CD4-positive, alpha-beta T cell (primary cell): ENCODE measurements at regions of chr7 and their contacts with region 1.

Region 1: GRCh38 chr7:99928994-99929729 is at the start of gene GJC3:
- DNase-seq: peak; percentile 15 to 68 (median 45)
- ATAC-seq: peak; percentile 94
- H3K4me3 ChIP-seq: peak within 1 kb of the TSS; percentile 43
- H3K4me3 Mint-ChIP-seq: peak within 1 kb of the TSS; percentile 79
- H3K27ac ChIP-seq: no peak within 1 kb of the TSS
- H3K27ac Mint-ChIP-seq: peak within 1 kb of the TSS; percentile 61
- H3K4me1 ChIP-seq: peaks cover 18% of the 10 kb centered on the region
- H3K4me1 Mint-ChIP-seq: peaks cover 31% of the 10 kb centered on the region
- H3K27me3 ChIP-seq: peaks cover 0 to 13% of the 10 kb centered on the region in 2 experiments
- H3K27me3 Mint-ChIP-seq: peaks cover 6% of the 10 kb centered on the region
- CTCF ChIP-seq: no peak
- total RNA-seq, gene GJC3: 0.25 to 0.36 TPM

Region 2: DNA sequence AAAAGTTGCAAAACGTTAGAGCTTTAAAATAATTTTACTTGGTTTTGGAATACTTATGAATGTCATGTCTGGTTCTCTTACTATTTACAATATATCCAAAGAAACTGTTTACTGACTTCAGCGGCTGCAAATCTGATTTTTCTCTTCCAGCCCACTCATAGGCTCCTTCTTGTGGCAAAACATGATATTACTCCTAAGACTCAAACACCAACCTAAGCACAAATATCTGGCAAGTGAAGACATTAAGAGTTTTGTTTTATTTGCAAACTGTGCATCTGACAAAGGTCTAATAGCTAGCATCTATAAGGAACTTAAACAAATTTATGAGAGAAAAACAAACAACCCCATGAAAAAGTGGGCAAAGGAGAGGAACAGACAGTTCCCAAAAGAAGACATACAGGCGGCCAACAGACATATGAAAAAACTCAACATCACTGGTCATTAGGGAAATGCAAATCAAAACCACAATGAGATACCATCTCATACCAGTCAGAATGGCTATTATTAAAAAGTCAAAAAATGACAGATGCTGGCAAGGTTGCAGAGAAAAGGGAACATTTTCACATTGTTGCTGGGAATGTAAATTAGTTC is 20.6 kb after region 1 on chr7:
- CTCF ChIA-PET with region 1: interaction called, 4 read pairs
- POLR2A ChIA-PET with region 1: interaction called, 5 read pairs
- intact Hi-C with region 1: loop called (anchors 2 kb)
- DNase-seq: peak in 3 of 14 experiments; percentile 20 to 40 (median 35)
- ATAC-seq: peak; percentile 52
- H3K4me3 ChIP-seq: no peak overlapping the region
- H3K4me3 Mint-ChIP-seq: no peak overlapping the region
- H3K27ac ChIP-seq: no peak overlapping the region
- H3K27ac Mint-ChIP-seq: no peak overlapping the region
- H3K4me1 ChIP-seq: no peaks in the 10 kb centered on the region
- H3K4me1 Mint-ChIP-seq: no peaks in the 10 kb centered on the region
- H3K27me3 ChIP-seq: no peaks in the 10 kb centered on the region
- H3K27me3 Mint-ChIP-seq: peaks cover 12% of the 10 kb centered on the region
- CTCF ChIP-seq: peak; percentile 49

Region 3: DNA sequence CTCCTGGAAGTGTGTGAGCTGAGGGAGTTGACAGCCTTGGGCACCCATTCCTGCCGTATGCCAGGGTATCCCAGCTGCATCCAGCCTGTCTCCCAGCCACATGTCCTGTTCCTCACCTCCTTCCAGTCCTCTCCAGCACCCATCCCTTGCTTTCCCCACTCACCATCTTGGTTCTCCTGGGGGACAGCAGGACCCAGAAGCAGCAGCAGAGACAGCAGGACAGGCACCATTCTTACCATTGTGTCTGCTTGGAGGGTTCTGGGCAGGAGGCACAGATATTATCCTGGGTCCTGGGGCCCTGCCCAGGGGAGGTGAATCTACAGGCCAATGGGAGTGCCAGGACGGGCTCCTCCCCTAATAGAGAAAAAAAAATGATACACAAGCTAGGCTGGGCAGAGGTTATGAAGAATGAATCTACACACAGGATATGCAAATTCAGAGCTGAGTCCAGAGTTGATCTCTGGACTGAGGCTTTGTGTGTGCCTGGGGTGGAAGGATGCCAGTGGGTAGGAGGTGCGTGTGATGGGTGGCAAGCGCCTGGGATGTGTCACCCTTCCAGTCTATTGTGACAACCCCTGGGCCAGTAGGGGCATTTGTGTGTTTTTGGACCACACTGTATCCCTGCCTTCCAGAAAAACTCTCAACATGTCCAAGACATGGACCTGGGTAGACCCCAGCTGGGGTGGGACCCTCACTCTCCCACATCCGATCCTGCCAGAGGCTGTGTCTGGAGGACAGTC is 46.8 kb after region 1 on chr7 and contains the start of gene AZGP1:
- CTCF ChIA-PET with region 1: no interaction called
- POLR2A ChIA-PET with region 1: no interaction called
- intact Hi-C with region 1: no loop called
- DNase-seq: no peak
- ATAC-seq: no peak
- H3K4me3 ChIP-seq: no peak within 1 kb of the TSS
- H3K4me3 Mint-ChIP-seq: no peak within 1 kb of the TSS
- H3K27ac ChIP-seq: no peak within 1 kb of the TSS
- H3K27ac Mint-ChIP-seq: no peak within 1 kb of the TSS
- H3K4me1 ChIP-seq: peaks cover 6% of the 10 kb centered on the region
- H3K4me1 Mint-ChIP-seq: peaks cover 9% of the 10 kb centered on the region
- H3K27me3 ChIP-seq: peaks cover 4 to 6% of the 10 kb centered on the region in 2 experiments
- H3K27me3 Mint-ChIP-seq: peaks cover 23% of the 10 kb centered on the region
- CTCF ChIP-seq: no peak
- total RNA-seq, gene AZGP1: not detected

Region 4: DNA sequence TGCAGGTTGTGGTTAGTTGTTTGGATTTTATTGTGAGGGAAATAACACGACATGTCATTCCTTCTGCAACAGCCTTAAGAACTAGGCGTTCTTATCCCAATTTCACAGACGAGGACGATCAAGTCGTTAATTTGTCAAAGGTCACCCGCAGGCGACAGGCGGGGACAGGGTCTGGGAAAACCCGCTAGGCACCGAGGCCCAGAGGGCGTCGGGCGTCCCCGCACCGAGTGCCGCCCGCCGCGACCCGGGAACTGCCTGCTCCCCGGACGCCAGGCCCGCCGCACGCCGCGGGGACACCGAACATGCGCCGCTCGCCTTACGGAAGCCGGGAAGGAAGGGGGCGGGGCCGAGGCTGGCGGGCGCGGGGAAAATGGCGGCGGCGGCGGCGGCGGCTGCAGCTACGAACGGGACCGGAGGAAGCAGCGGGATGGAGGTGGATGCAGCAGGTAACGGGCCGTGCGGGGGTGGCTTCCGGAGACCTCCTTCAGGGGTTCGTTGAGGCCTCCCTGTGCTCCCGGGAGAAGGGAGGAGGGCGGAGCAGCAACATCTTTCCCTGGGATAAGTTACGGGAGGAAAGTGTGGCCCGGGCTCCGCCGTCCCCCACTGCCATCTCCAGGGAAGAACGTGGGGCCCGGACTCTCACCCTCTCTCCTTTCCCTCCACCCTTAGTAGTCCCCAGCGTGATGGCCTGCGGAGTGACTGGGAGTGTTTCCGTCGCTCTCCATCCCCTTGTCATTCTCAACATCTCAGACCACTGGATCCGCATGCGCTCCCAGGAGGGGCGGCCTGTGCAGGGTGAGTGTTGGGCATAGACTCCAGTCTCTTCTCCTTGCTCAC is 159.7 kb after region 1 on chr7 and contains the start of gene COPS6:
- CTCF ChIA-PET with region 1: no interaction called
- POLR2A ChIA-PET with region 1: no interaction called
- intact Hi-C with region 1: no loop called
- DNase-seq: peak; percentile 79 to 94 (median 84)
- ATAC-seq: peak; percentile 87
- H3K4me3 ChIP-seq: peak within 1 kb of the TSS; percentile 92
- H3K4me3 Mint-ChIP-seq: peak within 1 kb of the TSS; percentile 90
- H3K27ac ChIP-seq: peak within 1 kb of the TSS; percentile 83 to 86
- H3K27ac Mint-ChIP-seq: peak within 1 kb of the TSS; percentile 91
- H3K4me1 ChIP-seq: peaks cover 21% of the 10 kb centered on the region
- H3K4me1 Mint-ChIP-seq: peaks cover 25% of the 10 kb centered on the region
- H3K27me3 ChIP-seq: no peaks in the 10 kb centered on the region
- H3K27me3 Mint-ChIP-seq: no peaks in the 10 kb centered on the region
- CTCF ChIP-seq: no peak
- total RNA-seq, gene COPS6: 79.0 to 83.9 TPM